Right lobe of liver (tissue), 6 donors: ENCODE measurements at regions of chr11 and their contacts with region 1.

Region 1: GRCh38 chr11:44936525-44936924 is 14.2 kb downstream of the TP53I11 start:
- DNase-seq: peak; percentile 77 to 82 (median 81)
- ATAC-seq: peak; percentile 85 to 95 (median 88)
- H3K4me3 ChIP-seq: no peak overlapping the region
- H3K27ac ChIP-seq: no peak overlapping the region
- H3K4me1 ChIP-seq: no peaks in the 10 kb centered on the region
- H3K27me3 ChIP-seq: no peaks in the 10 kb centered on the region
- CTCF ChIP-seq: peak; percentile 92 to 97 (median 94)
- POLR2A ChIP-seq: no peak

Region 2: GRCh38 chr11:45089676-45090499 is 153.4 kb after region 1 on chr11:
- intact Hi-C with region 1: no loop called
- DNase-seq: no peak
- ATAC-seq: peak in 1 of 4 donors; percentile 3
- H3K4me3 ChIP-seq: no peak overlapping the region
- H3K27ac ChIP-seq: peak overlapping the region; percentile 6 to 31 (median 19)
- H3K4me1 ChIP-seq: peaks cover 0 to 10% (median 3%) of the 10 kb centered on the region in 4 donors
- H3K27me3 ChIP-seq: no peaks in the 10 kb centered on the region
- CTCF ChIP-seq: no peak
- POLR2A ChIP-seq: no peak

Region 3: GRCh38 chr11:45110562-45110961 is 174.0 kb after region 1 on chr11:
- intact Hi-C with region 1: loop called (anchors 2 to 5 kb)
- DNase-seq: no peak
- ATAC-seq: peak; percentile 88 to 94 (median 92)
- H3K4me3 ChIP-seq: no peak overlapping the region
- H3K27ac ChIP-seq: no peak overlapping the region
- H3K4me1 ChIP-seq: no peaks in the 10 kb centered on the region
- H3K27me3 ChIP-seq: peaks cover 0 to 4% of the 10 kb centered on the region in 2 donors
- CTCF ChIP-seq: peak; percentile 66 to 83 (median 77)
- POLR2A ChIP-seq: no peak

Region 4: GRCh38 chr11:45163956-45164575 is 227.5 kb after region 1 on chr11:
- intact Hi-C with region 1: no loop called
- DNase-seq: no peak
- ATAC-seq: no peak
- H3K4me3 ChIP-seq: no peak overlapping the region
- H3K27ac ChIP-seq: no peak overlapping the region
- H3K4me1 ChIP-seq: peaks cover 0 to 16% (median 5%) of the 10 kb centered on the region in 4 donors
- H3K27me3 ChIP-seq: no peaks in the 10 kb centered on the region
- CTCF ChIP-seq: no peak
- POLR2A ChIP-seq: no peak

Region 5: DNA sequence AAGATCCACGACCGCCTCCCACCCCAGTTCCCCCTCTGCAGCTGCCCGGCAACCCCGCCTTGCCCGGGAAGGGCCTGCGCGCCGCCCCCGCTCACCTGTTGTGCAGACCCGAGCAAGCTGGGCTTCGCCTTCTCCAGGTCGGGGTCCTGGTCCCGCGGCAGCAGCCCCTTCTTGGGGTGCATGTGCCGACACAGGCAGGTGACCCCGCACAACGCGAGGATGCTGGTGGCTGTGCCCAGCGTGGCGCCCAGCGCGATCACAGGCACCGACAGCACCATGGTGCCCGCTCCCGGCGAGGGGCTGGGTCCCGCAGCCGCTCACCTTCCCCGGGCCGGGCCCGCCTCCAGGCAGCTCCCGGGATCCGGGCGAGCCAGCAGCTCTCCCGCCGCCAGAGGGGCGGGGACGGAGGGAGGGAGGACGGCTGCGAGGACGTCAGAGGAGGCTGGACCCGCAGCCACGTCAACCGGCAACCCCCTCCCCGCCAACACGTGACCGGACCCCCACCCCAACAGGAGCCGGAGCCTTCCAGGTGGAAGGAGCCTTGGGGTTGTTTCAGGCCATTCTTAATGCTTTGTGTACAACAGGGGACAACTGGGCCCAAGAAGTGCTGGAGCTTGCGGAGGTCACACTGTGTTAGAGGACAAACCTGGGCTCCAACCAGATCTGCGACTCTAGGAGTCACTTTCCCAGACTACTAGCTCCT is 349.6 kb after region 1 on chr11 and contains the start of gene SYT13:
- intact Hi-C with region 1: loop called (anchors 10 kb)
- DNase-seq: peak in 1 of 3 donors; percentile 33
- ATAC-seq: peak; percentile 50 to 61 (median 56)
- H3K4me3 ChIP-seq: peak within 1 kb of the TSS in 1 of 3 donors; percentile 2
- H3K27ac ChIP-seq: no peak within 1 kb of the TSS
- H3K4me1 ChIP-seq: no peaks in the 10 kb centered on the region
- H3K27me3 ChIP-seq: peaks cover 0 to 4% of the 10 kb centered on the region in 2 donors
- CTCF ChIP-seq: no peak
- POLR2A ChIP-seq: no peak
- total RNA-seq, gene SYT13: 0.12 to 0.63 (median 0.44) TPM in 5 of 6 experiments, not detected in the other

Region 6: DNA sequence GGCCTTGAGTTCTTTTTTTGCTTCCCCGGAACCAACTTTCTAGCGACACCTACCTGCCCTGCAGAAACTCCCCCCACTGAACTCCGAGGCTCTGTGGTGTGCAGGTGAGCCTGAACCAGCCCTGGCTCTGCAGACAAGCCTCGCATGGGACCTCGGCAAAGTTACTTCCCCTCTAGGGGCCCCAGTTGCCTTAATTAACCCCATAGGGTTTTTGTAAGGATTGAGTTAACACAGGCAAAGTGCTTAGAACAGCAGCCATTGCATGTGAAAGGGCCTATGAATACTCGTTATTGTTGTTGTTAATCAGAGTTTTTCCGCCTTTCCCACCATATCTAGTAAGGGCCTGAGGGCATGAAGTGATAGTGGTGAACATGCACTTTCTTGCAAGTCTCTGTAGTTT is 362.2 kb after region 1 on chr11:
- intact Hi-C with region 1: loop called in 1 of 2 experiments (anchors 10 kb)
- DNase-seq: no peak
- ATAC-seq: no peak
- H3K4me3 ChIP-seq: no peak overlapping the region
- H3K27ac ChIP-seq: no peak overlapping the region
- H3K4me1 ChIP-seq: no peaks in the 10 kb centered on the region
- H3K27me3 ChIP-seq: no peaks in the 10 kb centered on the region
- CTCF ChIP-seq: no peak
- POLR2A ChIP-seq: no peak

Region 7: DNA sequence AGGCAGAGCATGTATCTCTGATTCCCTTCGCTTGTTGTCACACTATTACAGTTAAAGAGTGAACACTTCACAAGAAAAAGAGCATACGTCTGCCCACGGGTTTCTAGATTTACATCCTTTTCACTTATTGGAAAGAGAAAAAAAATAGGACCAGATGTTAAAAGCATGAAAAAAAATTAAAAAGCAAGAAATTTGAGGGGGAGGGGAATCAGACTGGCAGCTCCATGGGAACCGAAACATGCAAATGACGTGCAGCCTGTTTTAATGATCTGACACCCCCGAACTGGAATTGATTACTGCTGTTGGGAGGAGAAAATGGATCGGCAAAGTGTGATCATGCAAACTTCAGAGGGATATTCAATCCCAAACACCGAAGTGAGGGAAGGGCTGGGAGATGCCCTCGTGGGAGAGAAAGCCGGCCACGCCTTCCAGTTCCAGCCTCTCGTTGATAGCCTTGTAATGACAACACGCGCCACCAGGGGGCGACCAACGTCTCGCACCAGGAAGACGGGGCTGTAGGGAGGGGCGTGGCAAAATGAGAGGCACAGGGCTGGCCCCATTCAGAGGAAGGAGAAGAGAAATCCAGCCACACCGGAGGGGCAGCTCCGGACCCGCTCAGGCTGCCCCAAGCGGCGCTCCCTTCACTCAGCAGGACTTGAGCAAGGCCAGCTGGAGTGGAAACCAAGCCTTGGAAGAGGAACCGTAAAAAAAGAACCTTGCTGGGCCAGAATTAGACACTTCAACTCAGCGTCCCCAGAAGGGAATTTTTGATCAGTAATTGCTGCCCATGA is 403.4 kb after region 1 on chr11:
- intact Hi-C with region 1: loop called in 1 of 2 experiments (anchors 10 kb)
- DNase-seq: peak; percentile 93 to 94 (median 93)
- ATAC-seq: peak; percentile 99 to 100 (median 100)
- H3K4me3 ChIP-seq: no peak overlapping the region
- H3K27ac ChIP-seq: no peak overlapping the region
- H3K4me1 ChIP-seq: no peaks in the 10 kb centered on the region
- H3K27me3 ChIP-seq: no peaks in the 10 kb centered on the region
- CTCF ChIP-seq: peak; percentile 88 to 95 (median 90)
- POLR2A ChIP-seq: no peak